GM18951 (cell line): ENCODE measurements at regions of chr12 and their contacts with region 1.

Region 1: GRCh38 chr12:76636121-76636692 is 76.6 kb upstream of the OSBPL8 start:
- POLR2A ChIP-seq: no peak

Region 2: GRCh38 chr12:76144245-76144549 is 492.0 kb before region 1 on chr12:
- in situ Hi-C with region 1: no loop called
- POLR2A ChIP-seq: no peak

Region 3: GRCh38 chr12:76927170-76927784 is 291.1 kb after region 1 on chr12:
- in situ Hi-C with region 1: loop called (anchors 25 kb)
- POLR2A ChIP-seq: no peak